AG04449 (cell line): ENCODE measurements at regions of chr12 and their contacts with region 1.

Region 1: GRCh38 chr12:49130151-49131050 is 794 bp downstream of the TUBA1B start:
- DNase-seq: peak; percentile 63
- H3K4me3 ChIP-seq: peak overlapping the region; percentile 96
- CTCF ChIP-seq: peak; percentile 98

Region 2: GRCh38 chr12:49069507-49070346 is 60.7 kb before region 1 on chr12 and contains the start of gene RHEBL1:
- CTCF ChIA-PET with region 1: interaction called, 95 read pairs
- POLR2A ChIA-PET with region 1: interaction called, 14 read pairs
- DNase-seq: peak; percentile 54
- H3K4me3 ChIP-seq: peak within 1 kb of the TSS; percentile 77
- CTCF ChIP-seq: no peak

Region 3: DNA sequence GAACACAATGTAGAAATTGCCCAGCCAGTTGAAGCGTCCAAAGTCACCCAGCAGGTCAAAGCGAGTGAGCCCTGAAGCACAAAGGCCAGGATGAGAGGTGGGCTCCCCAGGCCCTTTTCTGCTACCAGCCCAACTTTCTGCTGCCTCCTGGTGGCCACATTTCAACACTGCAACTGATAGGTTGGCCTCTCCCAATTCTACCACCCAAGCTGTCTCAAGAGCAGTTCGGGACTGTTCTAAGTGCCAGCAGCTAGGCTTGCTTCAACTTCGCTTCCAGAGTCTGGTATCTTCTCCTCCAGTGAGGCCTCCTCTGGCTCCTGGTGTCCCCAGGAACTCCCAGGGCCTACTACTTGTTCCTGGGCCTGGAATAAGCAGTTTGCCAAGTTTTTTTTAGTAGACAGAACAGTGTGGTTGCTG is 32.4 kb before region 1 on chr12:
- CTCF ChIA-PET with region 1: interaction called, 17 read pairs
- POLR2A ChIA-PET with region 1: interaction called, 20 read pairs
- DNase-seq: no peak
- H3K4me3 ChIP-seq: no peak overlapping the region
- CTCF ChIP-seq: peak; percentile 69

Region 4: DNA sequence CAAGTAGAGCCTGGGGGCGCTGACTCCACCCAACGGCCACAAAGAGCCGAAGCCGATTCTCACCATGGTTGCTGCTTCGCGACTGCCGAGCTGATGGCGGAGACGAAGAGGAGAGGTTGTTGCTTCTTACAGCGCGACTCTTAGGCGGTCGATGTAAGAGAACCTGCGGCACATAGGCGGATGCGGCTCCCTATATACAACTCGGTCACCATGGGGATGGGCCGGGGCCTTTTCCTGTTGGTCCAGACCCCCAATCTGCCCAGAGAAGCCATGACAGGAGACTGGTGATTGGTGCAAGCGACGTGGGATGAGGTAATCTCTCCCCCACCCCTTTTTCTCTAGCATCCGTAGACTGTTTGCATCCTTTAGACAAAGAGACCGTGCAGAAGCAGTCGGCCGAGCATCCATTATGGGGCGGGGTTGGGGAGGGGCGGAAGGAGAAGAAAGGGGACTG is 58.5 kb after region 1 on chr12 and contains the start of gene TUBA1A:
- CTCF ChIA-PET with region 1: interaction called, 7 read pairs
- POLR2A ChIA-PET with region 1: interaction called, 37 read pairs
- DNase-seq: peak; percentile 96
- H3K4me3 ChIP-seq: peak within 1 kb of the TSS; percentile 89
- CTCF ChIP-seq: no peak

Region 5: DNA sequence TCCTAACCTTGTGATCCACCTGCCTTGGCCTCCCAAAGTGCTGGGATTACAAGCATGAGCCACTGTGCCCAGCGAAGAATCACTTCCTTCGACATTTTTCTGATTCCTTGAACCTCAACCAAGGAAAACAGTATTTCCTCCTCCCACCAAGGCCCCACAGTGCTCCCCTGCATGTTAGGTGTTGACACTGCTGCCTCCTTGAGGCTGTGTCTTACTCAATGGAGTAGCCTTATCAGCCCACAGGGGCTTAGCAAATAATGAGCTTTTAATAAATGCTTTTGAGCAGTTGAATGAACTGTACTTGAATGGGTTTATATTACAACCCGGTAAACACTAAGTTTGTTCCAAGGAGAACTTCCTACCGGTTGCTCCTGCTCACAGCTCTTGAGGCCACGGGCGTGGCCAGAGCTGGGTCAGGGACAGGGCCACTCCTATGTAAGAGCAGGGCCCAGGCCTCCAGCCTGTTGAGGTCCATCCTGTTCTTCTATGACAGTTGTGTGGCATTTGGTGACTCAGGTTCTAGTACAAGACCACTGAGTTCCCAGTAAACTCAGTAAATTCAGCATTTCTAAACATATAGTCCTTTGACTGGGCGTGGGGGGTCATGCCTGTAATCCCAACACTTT is 95.3 kb after region 1 on chr12:
- CTCF ChIA-PET with region 1: interaction called, 93 read pairs
- POLR2A ChIA-PET with region 1: interaction called, 36 read pairs
- DNase-seq: no peak
- H3K4me3 ChIP-seq: no peak overlapping the region
- CTCF ChIP-seq: no peak

Region 6: DNA sequence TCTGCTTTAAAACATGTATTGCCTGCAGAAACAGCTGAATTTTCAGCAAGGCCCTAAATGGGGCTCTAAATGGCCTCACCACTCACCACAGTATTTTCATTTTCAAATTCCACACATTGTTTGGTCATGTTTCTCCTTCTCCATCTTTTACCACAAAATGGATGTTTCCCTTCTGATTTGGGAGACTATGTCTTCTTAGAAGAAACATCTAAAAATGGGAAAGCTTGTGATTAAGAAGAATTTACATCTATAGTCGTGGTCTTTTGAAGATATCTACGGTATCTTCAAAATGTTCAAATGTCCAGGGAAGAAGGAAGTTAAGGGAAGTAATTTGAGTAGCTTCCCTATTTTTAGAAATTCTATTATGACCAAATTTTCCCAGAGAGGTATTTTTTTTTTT is 113.8 kb after region 1 on chr12:
- CTCF ChIA-PET with region 1: interaction called, 8 read pairs
- POLR2A ChIA-PET with region 1: interaction called, 19 read pairs
- DNase-seq: peak; percentile 62
- H3K4me3 ChIP-seq: no peak overlapping the region
- CTCF ChIP-seq: no peak